B cell (primary cell): ENCODE measurements at regions of chr10 and their contacts with region 1.

Region 1: DNA sequence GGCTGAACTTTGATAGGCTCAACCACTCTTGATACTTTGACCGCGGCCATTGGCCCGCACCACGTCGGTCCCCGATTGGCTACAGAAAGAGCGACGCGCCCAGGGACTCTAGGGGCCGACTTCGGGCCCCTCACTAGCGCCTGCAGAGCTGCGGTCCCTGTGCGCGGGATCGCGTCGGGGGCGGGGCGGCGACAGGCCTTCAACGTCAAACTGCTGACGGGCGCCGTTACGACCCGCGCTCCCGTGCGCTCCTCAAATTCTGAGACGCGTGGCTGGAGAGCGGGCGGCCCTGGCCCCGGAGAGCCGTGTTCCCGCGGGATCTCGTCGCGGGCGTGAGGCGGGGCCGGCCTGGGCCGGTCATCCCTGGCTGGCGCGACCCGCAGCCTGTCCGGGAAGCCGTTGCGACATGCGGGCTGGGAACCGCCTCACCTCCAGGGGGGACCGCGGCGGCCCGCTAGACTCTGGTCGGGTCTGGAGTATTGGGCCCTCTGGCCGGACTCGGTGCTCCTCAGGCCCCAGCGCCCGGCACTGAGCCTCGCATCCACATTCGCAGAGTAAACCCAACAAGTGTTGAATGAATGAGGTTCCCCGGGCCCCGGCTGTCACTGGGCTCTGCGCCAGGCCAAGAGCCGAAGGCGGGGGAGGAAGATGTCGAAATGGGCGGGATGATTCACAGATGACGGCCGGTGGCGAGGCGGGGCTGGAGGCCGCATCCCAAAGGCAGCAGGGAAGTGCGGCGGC is 644 bp upstream of the SLC25A28 start:
- DNase-seq: no peak
- ATAC-seq: peak; percentile 83
- H3K4me3 ChIP-seq: peak overlapping the region; percentile 57 to 88 (median 76)
- H3K4me3 Mint-ChIP-seq: peak overlapping the region; percentile 81
- H3K27ac ChIP-seq: peak overlapping the region; percentile 95 to 96
- H3K27ac Mint-ChIP-seq: peak overlapping the region; percentile 90
- H3K4me1 ChIP-seq: peaks cover 30 to 35% of the 10 kb centered on the region in 2 donors
- H3K4me1 Mint-ChIP-seq: peaks cover 45% of the 10 kb centered on the region
- H3K27me3 ChIP-seq: no peaks in the 10 kb centered on the region
- H3K27me3 Mint-ChIP-seq: no peaks in the 10 kb centered on the region
- CTCF ChIP-seq: no peak

Region 2: GRCh38 chr10:98446661-98447221 is 1174.1 kb before region 1 on chr10 and contains the start of gene HPS1:
- CTCF ChIA-PET with region 1: no interaction called
- POLR2A ChIA-PET with region 1: no interaction called
- intact Hi-C with region 1: loop called (anchors 2 kb)
- DNase-seq: peak; percentile 92
- ATAC-seq: peak; percentile 85
- H3K4me3 ChIP-seq: peak within 1 kb of the TSS; percentile 55 to 88 (median 82)
- H3K4me3 Mint-ChIP-seq: peak within 1 kb of the TSS; percentile 90
- H3K27ac ChIP-seq: peak within 1 kb of the TSS; percentile 94 to 97
- H3K27ac Mint-ChIP-seq: peak within 1 kb of the TSS; percentile 95
- H3K4me1 ChIP-seq: peaks cover 28 to 39% of the 10 kb centered on the region in 2 donors
- H3K4me1 Mint-ChIP-seq: peaks cover 49% of the 10 kb centered on the region
- H3K27me3 ChIP-seq: no peaks in the 10 kb centered on the region
- H3K27me3 Mint-ChIP-seq: no peaks in the 10 kb centered on the region
- CTCF ChIP-seq: no peak
- total RNA-seq, gene HPS1: 125 TPM in 2 replicates

Region 3: DNA sequence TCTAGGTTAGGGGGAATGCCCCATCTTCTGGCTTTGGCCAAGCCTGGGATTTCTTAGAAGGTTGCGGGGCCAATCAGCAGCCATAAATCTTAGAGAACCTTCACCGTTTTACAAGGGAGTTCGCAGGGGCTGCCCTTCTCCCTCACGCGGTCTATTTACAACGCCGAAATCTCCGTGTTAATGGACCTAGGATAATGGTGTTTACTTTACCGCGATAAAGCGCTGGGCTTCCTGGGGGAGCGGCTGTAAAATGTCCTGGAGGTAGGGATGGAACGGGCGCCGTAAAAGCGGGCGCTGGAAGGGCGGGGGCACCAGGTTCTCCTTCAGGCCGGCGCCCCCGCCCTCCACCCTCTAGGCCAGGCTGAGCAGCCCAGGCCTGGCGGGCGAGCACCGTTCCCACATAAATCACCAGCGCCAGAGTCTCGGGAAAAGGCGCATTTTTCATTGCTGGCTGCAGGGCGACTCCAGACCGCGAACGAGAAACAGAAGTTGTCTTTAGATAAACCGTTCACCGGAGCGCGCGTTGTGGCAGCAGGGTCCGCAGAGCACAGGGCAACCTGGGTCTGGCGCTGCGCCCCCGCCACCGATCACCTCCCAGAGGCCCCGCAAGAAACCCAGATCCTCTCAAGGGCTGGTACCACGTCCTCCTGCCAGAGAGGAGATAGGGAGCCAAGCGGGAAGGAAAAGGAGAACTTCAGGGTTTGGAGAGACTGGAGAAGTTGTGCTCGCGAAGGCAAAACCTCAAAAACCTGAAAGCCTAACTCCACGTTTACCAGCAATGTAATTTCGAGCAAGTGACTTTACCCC is 100.6 kb before region 1 on chr10:
- CTCF ChIA-PET with region 1: no interaction called
- POLR2A ChIA-PET with region 1: no interaction called
- intact Hi-C with region 1: no loop called
- DNase-seq: peak; percentile 31
- ATAC-seq: no peak
- H3K4me3 ChIP-seq: no peak overlapping the region
- H3K4me3 Mint-ChIP-seq: no peak overlapping the region
- H3K27ac ChIP-seq: no peak overlapping the region
- H3K27ac Mint-ChIP-seq: no peak overlapping the region
- H3K4me1 ChIP-seq: peaks cover 17 to 20% of the 10 kb centered on the region in 2 donors
- H3K4me1 Mint-ChIP-seq: peaks cover 10% of the 10 kb centered on the region
- H3K27me3 ChIP-seq: peaks cover 0 to 56% (median 33%) of the 10 kb centered on the region in 4 experiments
- H3K27me3 Mint-ChIP-seq: peaks cover 70% of the 10 kb centered on the region
- CTCF ChIP-seq: no peak

Region 4: DNA sequence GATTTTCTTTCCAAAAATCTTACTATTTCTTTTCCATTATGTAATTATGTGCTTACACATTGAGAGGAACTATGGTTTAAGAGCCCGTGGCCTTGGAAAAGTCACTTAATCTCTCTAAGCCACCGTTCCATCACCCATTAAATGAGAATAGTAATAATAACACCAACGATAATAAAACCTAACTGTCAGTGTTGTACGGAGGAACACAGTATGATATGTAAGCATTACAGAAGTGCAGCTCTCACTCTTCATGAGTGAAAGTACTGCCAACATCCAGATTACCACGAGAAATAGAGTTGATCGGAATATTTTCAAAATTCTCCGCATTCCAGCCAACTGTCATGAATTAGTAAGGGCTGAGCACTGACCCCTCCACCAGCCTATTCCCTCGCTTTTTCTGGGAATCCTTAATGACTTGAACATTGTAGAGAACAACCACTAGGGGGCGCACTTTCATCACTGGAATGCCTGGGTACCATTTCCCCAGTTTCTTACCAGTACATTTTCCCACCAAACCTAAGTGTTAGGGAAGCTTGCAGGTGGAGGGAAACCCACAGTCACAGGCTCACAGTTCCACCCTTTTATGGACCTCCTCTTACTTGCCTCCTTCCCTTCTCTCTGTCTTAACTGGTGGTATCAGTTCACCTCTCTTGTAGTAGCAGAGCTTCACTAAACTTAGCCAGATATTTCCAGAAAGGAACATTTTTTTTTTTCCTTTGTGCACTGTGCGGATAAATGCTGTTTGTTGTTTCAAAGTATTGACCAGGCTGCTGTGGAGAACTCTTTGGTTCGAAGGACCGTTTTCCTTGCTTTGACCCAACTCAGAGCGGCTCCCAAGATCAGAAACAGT is 60.4 kb before region 1 on chr10:
- CTCF ChIA-PET with region 1: interaction called, 353 read pairs
- POLR2A ChIA-PET with region 1: no interaction called
- intact Hi-C with region 1: no loop called
- DNase-seq: peak; percentile 70
- ATAC-seq: no peak
- H3K4me3 ChIP-seq: no peak overlapping the region
- H3K4me3 Mint-ChIP-seq: no peak overlapping the region
- H3K27ac ChIP-seq: no peak overlapping the region
- H3K27ac Mint-ChIP-seq: peak overlapping the region; percentile 39
- H3K4me1 ChIP-seq: peaks cover 8 to 18% of the 10 kb centered on the region in 2 donors
- H3K4me1 Mint-ChIP-seq: peaks cover 23% of the 10 kb centered on the region
- H3K27me3 ChIP-seq: peaks cover 0 to 5% (median 2%) of the 10 kb centered on the region in 4 experiments
- H3K27me3 Mint-ChIP-seq: peaks cover 5% of the 10 kb centered on the region
- CTCF ChIP-seq: peak; percentile 94

Region 5: DNA sequence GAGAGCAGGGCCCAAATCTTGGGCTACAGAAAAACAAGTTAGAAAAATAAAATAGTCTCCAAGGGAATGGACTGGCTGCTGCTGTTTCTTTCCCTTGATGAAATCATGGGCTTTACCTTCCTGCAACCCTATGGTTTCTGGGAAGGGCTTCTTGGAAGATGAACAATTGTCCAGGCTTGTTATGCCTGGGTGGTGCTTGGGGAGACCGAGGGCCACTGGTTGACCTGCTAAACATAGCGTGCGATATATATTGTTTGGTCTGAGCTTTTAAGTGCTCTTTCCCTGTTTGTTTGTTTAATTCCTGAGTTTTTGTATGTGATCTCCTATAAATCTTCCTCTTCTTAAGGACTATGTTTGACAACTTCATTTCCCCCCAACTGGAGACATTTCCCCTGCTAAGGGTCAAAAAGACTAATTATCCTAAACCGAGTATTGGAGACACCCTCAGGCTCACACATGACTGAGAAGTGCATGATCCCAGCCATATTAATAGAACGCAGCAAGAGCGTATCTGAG is 38.6 kb before region 1 on chr10:
- CTCF ChIA-PET with region 1: no interaction called
- POLR2A ChIA-PET with region 1: no interaction called
- intact Hi-C with region 1: no loop called
- DNase-seq: no peak
- ATAC-seq: no peak
- H3K4me3 ChIP-seq: no peak overlapping the region
- H3K4me3 Mint-ChIP-seq: no peak overlapping the region
- H3K27ac ChIP-seq: no peak overlapping the region
- H3K27ac Mint-ChIP-seq: no peak overlapping the region
- H3K4me1 ChIP-seq: no peaks in the 10 kb centered on the region
- H3K4me1 Mint-ChIP-seq: no peaks in the 10 kb centered on the region
- H3K27me3 ChIP-seq: peaks cover 0 to 2% (median 0%) of the 10 kb centered on the region in 4 experiments
- H3K27me3 Mint-ChIP-seq: peaks cover 3% of the 10 kb centered on the region
- CTCF ChIP-seq: no peak

Region 6: DNA sequence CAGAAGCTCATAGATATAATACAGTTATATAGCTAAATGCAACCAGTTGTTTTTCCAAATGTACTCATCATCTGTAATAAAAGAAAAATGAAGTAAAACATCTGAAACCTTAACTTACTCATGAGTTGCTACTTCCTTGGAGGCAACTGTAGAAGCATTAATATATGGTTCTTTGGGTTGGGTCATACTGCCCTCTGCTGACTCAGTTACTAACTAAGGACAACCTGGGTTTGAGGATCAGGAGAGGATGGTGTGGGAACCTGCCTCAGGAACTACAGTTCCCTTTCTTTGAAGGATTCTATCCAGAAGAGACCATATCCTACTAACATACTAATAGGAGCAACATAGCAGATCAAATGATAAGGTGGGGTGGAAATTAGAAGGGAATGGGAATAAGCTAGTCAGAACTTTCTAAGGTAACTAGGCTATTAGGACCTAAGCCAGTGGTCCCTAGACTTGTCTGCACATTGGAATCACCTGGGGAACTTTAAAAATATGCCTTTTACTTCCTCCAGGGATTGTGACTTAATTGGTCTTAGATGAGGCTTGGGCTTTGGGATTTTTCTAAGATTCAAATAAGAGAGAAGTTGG is 90.3 kb after region 1 on chr10:
- CTCF ChIA-PET with region 1: interaction called, 7 read pairs
- POLR2A ChIA-PET with region 1: no interaction called
- intact Hi-C with region 1: loop called (anchors 5 kb)
- DNase-seq: peak; percentile 65
- ATAC-seq: peak; percentile 51
- H3K4me3 ChIP-seq: no peak overlapping the region
- H3K4me3 Mint-ChIP-seq: no peak overlapping the region
- H3K27ac ChIP-seq: no peak overlapping the region
- H3K27ac Mint-ChIP-seq: no peak overlapping the region
- H3K4me1 ChIP-seq: no peaks in the 10 kb centered on the region
- H3K4me1 Mint-ChIP-seq: no peaks in the 10 kb centered on the region
- H3K27me3 ChIP-seq: no peaks in the 10 kb centered on the region
- H3K27me3 Mint-ChIP-seq: no peaks in the 10 kb centered on the region
- CTCF ChIP-seq: peak; percentile 70

Region 7: DNA sequence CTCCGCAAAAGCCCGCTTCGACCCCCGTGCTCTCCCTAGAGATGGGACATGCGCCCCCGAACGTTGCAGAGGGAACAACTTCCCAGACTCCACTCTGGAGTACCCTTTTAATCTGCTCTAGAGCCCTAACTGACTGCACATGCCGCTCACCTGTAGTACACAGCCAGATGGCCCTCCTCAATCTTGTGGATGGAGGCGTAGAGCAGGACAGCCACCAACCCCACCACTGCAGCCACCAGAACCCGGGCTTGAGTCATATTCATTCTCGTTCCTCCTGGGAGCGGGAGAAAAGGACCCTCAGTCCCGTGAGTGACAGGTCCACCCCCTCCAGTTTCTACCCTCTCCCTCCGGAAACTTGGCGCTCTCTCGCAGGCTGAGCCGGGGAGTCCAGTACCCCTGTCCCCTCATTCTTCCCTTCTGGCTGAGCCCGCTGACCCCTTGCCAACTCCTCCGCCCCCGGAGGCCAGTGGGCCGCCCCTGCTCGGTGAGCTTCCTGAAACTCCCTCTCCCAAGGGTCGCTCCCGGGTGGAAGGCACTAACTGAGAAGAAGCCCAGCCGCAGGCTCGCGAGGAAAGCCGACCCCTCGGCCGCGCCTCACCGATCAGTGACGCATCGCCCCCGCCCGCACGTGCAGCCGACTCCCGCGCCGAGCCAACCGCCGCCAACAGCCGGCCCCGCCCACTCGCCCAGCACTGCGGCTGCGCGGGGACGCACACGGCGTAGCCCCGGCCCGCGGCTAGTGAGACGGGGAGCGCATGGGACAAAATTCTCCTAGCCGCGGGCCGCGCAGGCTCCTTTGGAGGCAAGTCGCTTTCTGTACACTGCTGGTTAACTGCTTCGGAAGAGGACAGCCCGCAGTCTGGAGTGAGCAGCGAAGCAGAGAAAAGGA is 564.7 kb after region 1 on chr10 and contains the start of gene ERLIN1:
- CTCF ChIA-PET with region 1: no interaction called
- POLR2A ChIA-PET with region 1: no interaction called
- intact Hi-C with region 1: loop called (anchors 10 kb)
- DNase-seq: peak; percentile 93
- ATAC-seq: peak; percentile 94
- H3K4me3 ChIP-seq: peak within 1 kb of the TSS; percentile 95 to 99 (median 97)
- H3K4me3 Mint-ChIP-seq: peak within 1 kb of the TSS; percentile 99
- H3K27ac ChIP-seq: peak within 1 kb of the TSS; percentile 83
- H3K27ac Mint-ChIP-seq: peak within 1 kb of the TSS; percentile 96
- H3K4me1 ChIP-seq: peaks cover 19 to 21% of the 10 kb centered on the region in 2 donors
- H3K4me1 Mint-ChIP-seq: peaks cover 46% of the 10 kb centered on the region
- H3K27me3 ChIP-seq: no peaks in the 10 kb centered on the region
- H3K27me3 Mint-ChIP-seq: no peaks in the 10 kb centered on the region
- CTCF ChIP-seq: no peak
- total RNA-seq, gene ERLIN1: 9.0 and 9.7 TPM in 2 replicates